Calu3 (cell line): ENCODE measurements at regions of chr10 and their contacts with region 1.

Region 1: DNA sequence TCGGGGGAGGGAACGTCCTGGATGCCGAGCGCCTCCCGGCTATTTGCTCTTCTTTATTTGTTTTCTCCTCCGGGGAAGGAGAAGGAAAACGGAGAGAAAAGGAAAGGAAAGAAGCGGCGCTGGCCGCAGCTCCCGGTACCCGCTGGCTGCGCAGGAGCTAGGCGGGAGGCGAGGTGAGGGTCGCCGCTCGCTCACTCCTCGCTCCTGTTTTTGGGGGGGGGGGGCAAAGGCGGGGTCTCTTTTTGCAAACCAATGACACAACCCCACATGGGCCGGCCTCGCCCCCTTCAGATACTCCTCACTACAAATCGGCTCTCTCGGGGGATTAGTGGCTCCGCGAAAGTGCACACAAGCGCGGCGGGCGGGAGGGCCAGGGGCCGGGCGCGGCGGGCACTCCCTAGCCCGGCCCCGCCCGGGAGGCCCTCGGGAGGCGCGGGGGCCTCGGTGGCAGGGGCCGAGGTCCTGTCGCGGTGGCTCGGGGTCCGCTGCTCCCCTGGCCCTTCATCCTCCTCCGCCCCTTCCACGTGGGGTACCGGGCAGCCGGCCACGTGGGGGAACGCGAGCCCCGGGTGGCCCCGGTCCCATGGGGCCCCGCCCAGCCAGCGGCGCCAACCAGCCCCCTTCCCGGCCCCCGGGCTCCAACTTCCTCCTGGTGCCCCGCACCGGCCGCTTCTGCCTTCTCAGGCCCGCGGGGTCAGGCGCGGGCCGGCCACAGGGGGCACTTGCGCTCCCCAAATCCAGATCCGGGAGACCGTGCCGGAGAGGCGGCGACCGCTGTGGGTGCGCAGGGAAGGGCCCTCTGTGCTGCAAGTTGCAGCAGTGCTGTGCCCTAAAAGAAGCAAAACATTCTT is 718 bp upstream of the CTBP2 start:
- DNase-seq: peak; percentile 81
- H3K4me3 Mint-ChIP-seq: peak overlapping the region; percentile 75
- H3K27ac Mint-ChIP-seq: no peak overlapping the region
- H3K4me1 Mint-ChIP-seq: no peaks in the 10 kb centered on the region
- H3K27me3 Mint-ChIP-seq: no peaks in the 10 kb centered on the region
- CTCF ChIP-seq: peak; percentile 28

Region 2: GRCh38 chr10:125060826-125061556 is 100.1 kb before region 1 on chr10:
- CTCF ChIA-PET with region 1: interaction called, 6 read pairs
- intact Hi-C with region 1: loop called (anchors 5 kb)
- DNase-seq: peak; percentile 74
- H3K4me3 Mint-ChIP-seq: no peak overlapping the region
- H3K27ac Mint-ChIP-seq: no peak overlapping the region
- H3K4me1 Mint-ChIP-seq: peaks cover 19% of the 10 kb centered on the region
- H3K27me3 Mint-ChIP-seq: no peaks in the 10 kb centered on the region
- CTCF ChIP-seq: peak; percentile 69

Region 3: GRCh38 chr10:125102231-125102630 is 58.9 kb before region 1 on chr10:
- CTCF ChIA-PET with region 1: no interaction called
- intact Hi-C with region 1: loop called (anchors 10 kb)
- DNase-seq: peak; percentile 39
- H3K4me3 Mint-ChIP-seq: no peak overlapping the region
- H3K27ac Mint-ChIP-seq: peak overlapping the region; percentile 44
- H3K4me1 Mint-ChIP-seq: peaks cover 9% of the 10 kb centered on the region
- H3K27me3 Mint-ChIP-seq: no peaks in the 10 kb centered on the region
- CTCF ChIP-seq: no peak

Region 4: DNA sequence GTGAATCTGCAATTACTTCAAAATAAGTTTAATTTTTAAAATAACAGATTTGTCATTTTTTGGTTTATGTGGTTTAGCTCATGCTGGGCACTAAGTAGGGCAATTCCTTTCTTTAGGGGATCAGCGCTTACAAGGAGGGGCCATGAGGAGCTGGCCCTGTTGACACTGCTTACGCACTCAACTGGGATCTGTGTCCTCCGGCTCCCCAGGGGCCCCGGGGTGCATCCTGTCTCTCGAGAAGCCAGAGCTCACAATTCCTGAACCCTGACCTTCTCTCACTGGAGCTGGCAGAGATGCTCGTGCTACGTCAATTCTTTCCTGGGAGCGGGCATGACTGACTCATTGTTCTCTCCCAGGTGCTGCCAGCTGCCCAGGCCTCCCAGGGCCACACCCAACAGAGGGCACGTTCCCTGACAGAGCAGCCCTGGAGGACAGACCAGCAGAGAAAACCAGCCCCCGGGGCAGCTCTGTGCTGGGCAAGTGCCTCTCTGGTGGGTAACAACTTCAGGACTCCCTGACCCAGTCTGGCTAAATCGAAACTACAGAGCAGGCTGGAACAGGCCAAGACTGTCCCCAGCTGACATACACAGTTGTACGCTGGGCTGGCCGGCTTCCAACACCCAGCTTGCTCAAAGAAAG is 37.5 kb before region 1 on chr10:
- CTCF ChIA-PET with region 1: no interaction called
- intact Hi-C with region 1: loop called (anchors 5 kb)
- DNase-seq: peak; percentile 88
- H3K4me3 Mint-ChIP-seq: peak overlapping the region; percentile 62
- H3K27ac Mint-ChIP-seq: peak overlapping the region; percentile 98
- H3K4me1 Mint-ChIP-seq: peaks cover 52% of the 10 kb centered on the region
- H3K27me3 Mint-ChIP-seq: no peaks in the 10 kb centered on the region
- CTCF ChIP-seq: no peak

Region 5: GRCh38 chr10:125343118-125343925 is 182.2 kb after region 1 on chr10:
- CTCF ChIA-PET with region 1: no interaction called
- intact Hi-C with region 1: loop called (anchors 10 kb)
- DNase-seq: peak; percentile 5
- H3K4me3 Mint-ChIP-seq: no peak overlapping the region
- H3K27ac Mint-ChIP-seq: no peak overlapping the region
- H3K4me1 Mint-ChIP-seq: peaks cover 15% of the 10 kb centered on the region
- H3K27me3 Mint-ChIP-seq: no peaks in the 10 kb centered on the region
- CTCF ChIP-seq: no peak

Region 6: GRCh38 chr10:125629763-125630376 is 468.8 kb after region 1 on chr10:
- CTCF ChIA-PET with region 1: no interaction called
- intact Hi-C with region 1: loop called (anchors 5 kb)
- DNase-seq: peak; percentile 24
- H3K4me3 Mint-ChIP-seq: no peak overlapping the region
- H3K27ac Mint-ChIP-seq: no peak overlapping the region
- H3K4me1 Mint-ChIP-seq: peaks cover 8% of the 10 kb centered on the region
- H3K27me3 Mint-ChIP-seq: peaks cover 42% of the 10 kb centered on the region
- CTCF ChIP-seq: no peak